GM18951 (cell line): ENCODE measurements at regions of chr7 and their contacts with region 1.

Region 1: GRCh38 chr7:117127585-117128168 is 174.4 kb downstream of the ST7 start:
- POLR2A ChIP-seq: no peak

Region 2: GRCh38 chr7:116801092-116801727 is 326.5 kb before region 1 on chr7:
- in situ Hi-C with region 1: no loop called
- POLR2A ChIP-seq: no peak

Region 3: DNA sequence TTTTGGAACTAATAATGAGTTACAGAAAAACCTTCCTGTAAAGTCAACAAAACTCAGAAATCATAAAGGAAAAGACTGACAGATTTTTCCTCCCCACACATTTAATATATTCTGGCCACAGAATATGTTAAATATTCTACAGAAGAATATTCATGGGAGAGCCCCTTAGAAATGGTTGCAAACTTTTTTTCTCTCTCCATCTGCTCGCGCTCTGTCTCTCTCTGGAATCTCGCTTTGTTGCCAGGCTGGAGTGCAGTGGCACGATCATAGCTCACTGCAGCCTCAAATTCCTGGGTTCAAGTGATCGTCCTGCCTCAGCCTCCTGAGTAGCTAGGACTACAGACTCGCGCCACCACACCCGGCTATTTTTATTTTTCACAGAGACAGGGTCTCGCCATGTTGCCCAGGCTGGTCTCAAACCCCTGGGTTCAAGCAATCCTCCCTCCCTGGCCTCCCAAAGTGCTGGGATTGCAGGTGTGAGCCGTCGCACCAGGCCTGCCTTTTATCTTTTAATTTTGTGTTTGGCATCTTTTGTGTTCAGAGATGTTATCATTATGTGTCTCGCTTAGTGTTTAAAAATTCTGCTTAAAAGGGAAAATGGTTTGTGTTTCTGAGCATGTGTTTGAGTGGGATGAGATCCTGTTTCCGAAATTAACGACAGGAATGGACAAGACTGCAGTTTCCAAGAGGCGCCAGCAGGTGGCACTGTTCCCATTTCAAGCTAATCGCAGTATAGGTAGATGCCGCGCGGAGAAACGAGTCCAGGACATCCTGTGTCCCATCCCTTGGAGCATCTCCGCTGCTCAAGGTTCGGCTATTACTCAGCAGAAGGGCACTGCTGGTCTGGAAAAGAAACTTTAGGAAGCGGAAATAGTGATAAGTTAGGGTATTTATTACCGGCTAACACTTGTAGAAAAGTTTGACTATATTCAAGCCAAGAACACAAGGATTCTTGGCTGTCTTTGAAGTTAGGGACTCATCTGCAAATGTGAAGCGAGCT is 197.5 kb before region 1 on chr7:
- in situ Hi-C with region 1: loop called (anchors 10 kb)
- POLR2A ChIP-seq: no peak